ENCODE measurements at regions of chr6 and their contacts with region 1.

Region 1: GRCh38 chr6:24274441-24275083 is 83.3 kb downstream of the DCDC2 start:
- DNase-seq: peak; percentile 55
- H3K4me3 ChIP-seq: no peak overlapping the region
- H3K27ac ChIP-seq: peak overlapping the region; percentile 68
- H3K4me1 ChIP-seq: peaks cover 81% of the 10 kb centered on the region
- H3K27me3 ChIP-seq: no peaks in the 10 kb centered on the region
- CTCF ChIP-seq: peak; percentile 83

Region 2: GRCh38 chr6:24064082-24064481 is 210.5 kb before region 1 on chr6:
- CTCF ChIA-PET with region 1: interaction called, 9 read pairs
- POLR2A ChIA-PET with region 1: no interaction called
- intact Hi-C with region 1: loop called (anchors 1 kb)
- DNase-seq: peak; percentile 70
- H3K4me3 ChIP-seq: no peak overlapping the region
- H3K27ac ChIP-seq: no peak overlapping the region
- H3K4me1 ChIP-seq: peaks cover 9% of the 10 kb centered on the region
- H3K27me3 ChIP-seq: no peaks in the 10 kb centered on the region
- CTCF ChIP-seq: peak; percentile 73

Region 3: DNA sequence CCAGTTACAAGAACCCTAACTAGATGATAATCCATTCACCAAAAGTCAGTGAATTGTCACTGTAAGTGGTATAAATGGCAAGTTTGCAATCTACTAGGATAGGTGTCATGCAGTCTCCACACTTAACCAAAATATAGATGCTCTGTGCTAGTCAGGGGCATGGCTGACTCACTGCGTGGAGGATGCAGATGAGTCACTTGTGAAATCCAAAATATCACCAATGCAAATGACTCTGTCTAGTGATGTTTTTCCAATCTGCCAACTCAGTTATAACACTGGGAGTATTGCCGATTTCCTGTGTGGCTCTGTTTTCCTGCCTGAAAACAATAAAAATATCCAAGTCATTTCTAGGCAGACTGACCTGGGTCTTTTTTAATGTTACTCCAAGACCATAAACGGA is 196.4 kb before region 1 on chr6:
- CTCF ChIA-PET with region 1: interaction called, 10 read pairs
- POLR2A ChIA-PET with region 1: no interaction called
- intact Hi-C with region 1: no loop called
- DNase-seq: peak; percentile 33
- H3K4me3 ChIP-seq: no peak overlapping the region
- H3K27ac ChIP-seq: no peak overlapping the region
- H3K4me1 ChIP-seq: peaks cover 4% of the 10 kb centered on the region
- H3K27me3 ChIP-seq: no peaks in the 10 kb centered on the region
- CTCF ChIP-seq: no peak

Region 4: DNA sequence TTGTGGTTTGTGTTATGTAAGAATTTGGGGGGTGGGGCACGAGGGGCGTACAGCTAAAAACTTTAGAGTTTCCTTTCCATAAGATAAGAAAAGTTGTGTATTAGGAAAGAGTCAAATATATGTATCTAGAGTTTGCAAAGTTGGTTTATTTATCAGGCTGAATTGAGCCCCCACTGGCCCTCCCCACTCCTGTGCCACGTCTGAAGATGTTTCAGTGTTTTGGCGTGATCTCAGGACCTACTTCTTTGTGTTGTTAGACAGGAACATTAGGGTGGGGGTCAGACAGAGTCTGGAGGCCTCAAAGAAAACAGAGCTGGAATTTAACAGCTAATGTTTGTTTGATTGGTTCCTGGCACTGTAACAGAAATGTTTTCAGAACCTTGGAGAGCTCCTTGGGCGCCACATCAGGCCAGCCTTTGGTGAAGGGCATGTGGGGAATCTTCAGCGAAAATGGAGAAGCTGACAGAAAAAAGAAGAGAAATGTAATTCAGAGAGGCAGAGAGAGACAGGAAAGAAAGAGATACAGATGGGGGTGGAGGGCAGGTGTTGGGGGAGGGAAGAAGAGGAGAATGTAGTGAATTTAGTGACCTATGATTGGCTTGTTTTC is 147.9 kb before region 1 on chr6:
- CTCF ChIA-PET with region 1: interaction called, 10 read pairs
- POLR2A ChIA-PET with region 1: interaction called, 4 read pairs
- intact Hi-C with region 1: no loop called
- DNase-seq: peak; percentile 85
- H3K4me3 ChIP-seq: peak overlapping the region; percentile 23
- H3K27ac ChIP-seq: no peak overlapping the region
- H3K4me1 ChIP-seq: peaks cover 7% of the 10 kb centered on the region
- H3K27me3 ChIP-seq: peaks cover 42% of the 10 kb centered on the region
- CTCF ChIP-seq: no peak

Region 5: DNA sequence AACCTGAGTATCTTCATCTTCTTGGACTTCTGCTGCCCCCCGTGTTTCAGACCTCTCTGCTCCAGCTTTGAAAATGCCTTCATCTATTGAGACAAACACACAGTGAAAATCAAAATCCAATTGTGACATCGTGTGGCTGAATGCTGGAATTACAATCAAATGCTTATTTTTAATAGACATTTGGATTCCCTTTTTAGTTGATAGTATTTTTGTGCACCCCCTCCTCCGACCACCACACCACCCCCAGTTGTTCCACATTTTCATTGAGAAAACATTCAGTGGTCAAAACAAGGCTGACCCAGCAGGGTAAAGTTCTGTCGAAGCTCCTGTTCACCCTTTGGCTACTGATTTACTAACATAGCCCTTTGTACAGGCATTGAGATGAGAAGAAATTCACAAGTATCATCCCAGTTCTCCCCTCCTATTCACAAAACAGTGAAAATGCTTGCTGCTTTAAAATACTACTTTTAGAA is 69.5 kb before region 1 on chr6:
- CTCF ChIA-PET with region 1: interaction called, 3 read pairs
- POLR2A ChIA-PET with region 1: no interaction called
- intact Hi-C with region 1: loop called (anchors 5 kb)
- DNase-seq: peak; percentile 68
- H3K4me3 ChIP-seq: no peak overlapping the region
- H3K27ac ChIP-seq: no peak overlapping the region
- H3K4me1 ChIP-seq: no peaks in the 10 kb centered on the region
- H3K27me3 ChIP-seq: no peaks in the 10 kb centered on the region
- CTCF ChIP-seq: peak; percentile 75

Region 6: GRCh38 chr6:24520929-24521546 is 246.5 kb after region 1 on chr6:
- CTCF ChIA-PET with region 1: no interaction called
- POLR2A ChIA-PET with region 1: no interaction called
- intact Hi-C with region 1: no loop called
- DNase-seq: peak; percentile 62
- H3K4me3 ChIP-seq: no peak overlapping the region
- H3K27ac ChIP-seq: no peak overlapping the region
- H3K4me1 ChIP-seq: no peaks in the 10 kb centered on the region
- H3K27me3 ChIP-seq: peaks cover 4% of the 10 kb centered on the region
- CTCF ChIP-seq: peak; percentile 81

Measured in A673 (cell line).